A549 (cell line): ENCODE measurements at regions of chr3 and their contacts with region 1.

Region 1: GRCh38 chr3:52001443-52001974 is 5.8 kb upstream of the RPL29 start:
- DNase-seq: peak; percentile 64 to 85
- ATAC-seq: peak; percentile 78 to 95
- H3K4me3 ChIP-seq: no peak overlapping the region
- H3K27ac ChIP-seq: no peak overlapping the region
- H3K4me1 ChIP-seq: peaks cover 9% of the 10 kb centered on the region; the same call in 1 of the 3 replicates
- CTCF ChIP-seq: peak; percentile 83
- EP300 ChIP-seq: no peak
- POLR2A ChIP-seq: no peak
- RAD21 ChIP-seq: peak; percentile 92 to 94

Region 2: DNA sequence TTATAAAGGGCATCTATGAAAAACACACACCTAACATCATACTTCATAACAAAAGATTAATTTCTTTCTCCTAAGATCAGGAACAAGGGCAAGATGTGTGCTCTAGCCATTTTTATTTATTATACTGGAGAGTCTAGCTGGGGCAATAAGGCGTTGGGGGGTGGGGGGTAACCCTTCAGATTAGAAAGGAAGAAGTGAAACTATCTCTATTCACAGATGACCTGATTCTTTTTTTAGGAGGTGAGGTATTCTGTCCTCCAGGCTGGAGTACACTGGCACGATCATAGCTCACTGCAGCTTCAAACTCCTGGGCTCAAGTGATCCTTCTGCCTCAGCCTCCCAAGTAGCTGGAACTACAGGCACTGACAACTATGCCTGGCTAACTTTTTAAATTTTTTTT is 705.9 kb before region 1 on chr3:
- CTCF ChIA-PET with region 1: no interaction called
- POLR2A ChIA-PET with region 1: no interaction called
- DNase-seq: no peak
- ATAC-seq: no peak
- H3K4me3 ChIP-seq: no peak overlapping the region
- H3K27ac ChIP-seq: no peak overlapping the region
- H3K4me1 ChIP-seq: no peaks in the 10 kb centered on the region
- CTCF ChIP-seq: no peak
- EP300 ChIP-seq: no peak
- POLR2A ChIP-seq: no peak
- RAD21 ChIP-seq: no peak

Region 3: GRCh38 chr3:51845129-51845528 is 156.4 kb before region 1 on chr3:
- CTCF ChIA-PET with region 1: no interaction called
- POLR2A ChIA-PET with region 1: no interaction called
- DNase-seq: no peak
- ATAC-seq: no peak
- H3K4me3 ChIP-seq: no peak overlapping the region
- H3K27ac ChIP-seq: no peak overlapping the region
- H3K4me1 ChIP-seq: no peaks in the 10 kb centered on the region
- CTCF ChIP-seq: no peak
- EP300 ChIP-seq: no peak
- POLR2A ChIP-seq: no peak
- RAD21 ChIP-seq: no peak

Region 4: GRCh38 chr3:52041118-52041731 is 39.7 kb after region 1 on chr3:
- CTCF ChIA-PET with region 1: interaction called, 16 read pairs
- POLR2A ChIA-PET with region 1: no interaction called
- DNase-seq: no peak
- ATAC-seq: peak; percentile 35 to 73; a peak in 4 of 6 replicates
- H3K4me3 ChIP-seq: no peak overlapping the region
- H3K27ac ChIP-seq: peak overlapping the region in 1 of 2 experiments; percentile 14; a peak in 1 of 6 replicates
- H3K4me1 ChIP-seq: peaks cover 11% of the 10 kb centered on the region
- CTCF ChIP-seq: no peak; the same call in 2 of the 3 replicates
- EP300 ChIP-seq: no peak
- POLR2A ChIP-seq: no peak
- RAD21 ChIP-seq: no peak

Region 5: GRCh38 chr3:52123106-52123725 is 121.7 kb after region 1 on chr3:
- CTCF ChIA-PET with region 1: interaction called, 106 read pairs
- POLR2A ChIA-PET with region 1: no interaction called
- DNase-seq: peak; percentile 59 to 77
- ATAC-seq: peak; percentile 90 to 96
- H3K4me3 ChIP-seq: no peak overlapping the region
- H3K27ac ChIP-seq: no peak overlapping the region
- H3K4me1 ChIP-seq: peaks cover 11% of the 10 kb centered on the region; the same call in 2 of the 3 replicates
- CTCF ChIP-seq: peak; percentile 66
- EP300 ChIP-seq: no peak
- POLR2A ChIP-seq: no peak
- RAD21 ChIP-seq: peak; percentile 71 to 74

Region 6: GRCh38 chr3:52136513-52136912 is 135.0 kb after region 1 on chr3:
- CTCF ChIA-PET with region 1: interaction called, 218 read pairs
- POLR2A ChIA-PET with region 1: no interaction called
- DNase-seq: no peak
- ATAC-seq: no peak
- H3K4me3 ChIP-seq: no peak overlapping the region
- H3K27ac ChIP-seq: no peak overlapping the region
- H3K4me1 ChIP-seq: no peaks in the 10 kb centered on the region
- CTCF ChIP-seq: no peak
- EP300 ChIP-seq: no peak
- POLR2A ChIP-seq: no peak
- RAD21 ChIP-seq: no peak